CD4-positive, alpha-beta T cell (primary cell): ENCODE measurements at regions of chr1 and their contacts with region 1.

Region 1: DNA sequence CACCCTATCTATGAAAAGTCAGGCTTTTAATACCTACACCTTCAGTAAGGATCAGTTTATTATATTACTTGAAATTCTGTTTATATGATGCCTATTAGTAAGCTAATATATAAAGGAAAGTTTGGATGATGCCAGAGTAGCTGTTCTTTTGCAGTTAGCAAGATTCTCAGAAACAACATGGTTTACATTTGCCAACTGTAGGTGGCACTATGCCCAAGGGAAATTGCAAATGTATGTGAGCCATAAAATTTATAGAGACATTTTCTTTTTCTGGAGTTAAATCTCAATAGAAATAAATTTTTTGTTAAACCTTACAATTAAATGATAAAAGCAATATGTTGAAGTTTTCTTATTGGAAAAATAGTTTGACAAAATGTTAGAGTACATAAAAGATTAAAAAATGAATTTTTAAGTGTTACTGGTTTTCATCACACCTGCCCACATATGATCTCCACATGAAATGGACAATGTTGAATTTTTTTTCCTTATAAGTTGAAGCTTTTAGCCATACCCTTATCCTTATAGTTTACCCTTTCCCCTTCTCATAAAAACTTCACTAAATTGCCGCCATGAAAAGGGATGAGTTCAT is 32.1 kb upstream of the EPHX4 start:
- DNase-seq: peak in 12 of 14 experiments; percentile 3 to 79 (median 32)
- ATAC-seq: peak; percentile 54
- H3K4me3 ChIP-seq: no peak overlapping the region
- H3K4me3 Mint-ChIP-seq: no peak overlapping the region
- H3K27ac ChIP-seq: no peak overlapping the region
- H3K27ac Mint-ChIP-seq: no peak overlapping the region
- H3K4me1 ChIP-seq: no peaks in the 10 kb centered on the region
- H3K4me1 Mint-ChIP-seq: no peaks in the 10 kb centered on the region
- H3K27me3 ChIP-seq: no peaks in the 10 kb centered on the region
- H3K27me3 Mint-ChIP-seq: no peaks in the 10 kb centered on the region
- CTCF ChIP-seq: peak; percentile 77

Region 2: GRCh38 chr1:91968334-91968733 is 29.4 kb before region 1 on chr1:
- CTCF ChIA-PET with region 1: no interaction called
- POLR2A ChIA-PET with region 1: no interaction called
- intact Hi-C with region 1: no loop called
- DNase-seq: no peak
- ATAC-seq: no peak
- H3K4me3 ChIP-seq: no peak overlapping the region
- H3K4me3 Mint-ChIP-seq: no peak overlapping the region
- H3K27ac ChIP-seq: no peak overlapping the region
- H3K27ac Mint-ChIP-seq: no peak overlapping the region
- H3K4me1 ChIP-seq: no peaks in the 10 kb centered on the region
- H3K4me1 Mint-ChIP-seq: no peaks in the 10 kb centered on the region
- H3K27me3 ChIP-seq: no peaks in the 10 kb centered on the region
- H3K27me3 Mint-ChIP-seq: peaks cover 5% of the 10 kb centered on the region
- CTCF ChIP-seq: no peak

Region 3: GRCh38 chr1:92051948-92052347 is 54.2 kb after region 1 on chr1:
- CTCF ChIA-PET with region 1: no interaction called
- POLR2A ChIA-PET with region 1: no interaction called
- intact Hi-C with region 1: no loop called
- DNase-seq: no peak
- ATAC-seq: no peak
- H3K4me3 ChIP-seq: no peak overlapping the region
- H3K4me3 Mint-ChIP-seq: no peak overlapping the region
- H3K27ac ChIP-seq: no peak overlapping the region
- H3K27ac Mint-ChIP-seq: no peak overlapping the region
- H3K4me1 ChIP-seq: no peaks in the 10 kb centered on the region
- H3K4me1 Mint-ChIP-seq: no peaks in the 10 kb centered on the region
- H3K27me3 ChIP-seq: no peaks in the 10 kb centered on the region
- H3K27me3 Mint-ChIP-seq: peaks cover under 1% of the 10 kb centered on the region
- CTCF ChIP-seq: no peak

Region 4: DNA sequence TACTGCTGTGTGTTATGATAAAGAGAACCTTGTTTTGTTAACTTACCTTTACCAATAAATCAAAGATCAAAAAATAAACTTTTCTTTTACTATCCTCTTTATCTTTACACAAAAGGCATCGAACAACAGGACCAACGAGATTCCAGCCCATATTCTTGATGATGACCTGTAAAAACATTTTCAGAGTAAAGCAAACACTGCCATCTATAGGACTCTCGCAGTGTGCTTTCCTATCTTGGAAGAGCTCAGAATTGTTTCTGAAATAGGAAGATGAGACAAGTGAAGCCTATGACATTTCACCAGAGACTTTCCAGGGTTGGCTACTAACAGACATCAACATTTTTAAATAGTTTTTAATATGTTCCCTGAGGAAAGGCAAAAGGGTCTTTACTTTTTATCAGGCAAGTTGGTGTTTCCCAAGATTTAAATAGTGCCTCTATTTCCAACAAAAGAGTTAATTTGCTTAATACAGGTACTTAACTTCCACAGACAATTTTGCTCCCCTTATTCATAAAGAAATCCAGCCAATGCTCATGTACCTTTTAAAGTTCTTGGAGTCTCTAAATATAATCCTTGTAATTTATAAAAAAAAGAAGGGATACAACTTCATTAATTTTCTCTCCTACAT is 293.8 kb after region 1 on chr1:
- CTCF ChIA-PET with region 1: interaction called, 3 read pairs
- POLR2A ChIA-PET with region 1: no interaction called
- intact Hi-C with region 1: loop called (anchors 1 kb)
- DNase-seq: peak in 4 of 14 experiments; percentile 17 to 51 (median 46)
- ATAC-seq: no peak
- H3K4me3 ChIP-seq: no peak overlapping the region
- H3K4me3 Mint-ChIP-seq: no peak overlapping the region
- H3K27ac ChIP-seq: no peak overlapping the region
- H3K27ac Mint-ChIP-seq: no peak overlapping the region
- H3K4me1 ChIP-seq: no peaks in the 10 kb centered on the region
- H3K4me1 Mint-ChIP-seq: peaks cover 12% of the 10 kb centered on the region
- H3K27me3 ChIP-seq: no peaks in the 10 kb centered on the region
- H3K27me3 Mint-ChIP-seq: no peaks in the 10 kb centered on the region
- CTCF ChIP-seq: peak; percentile 71

Region 5: GRCh38 chr1:92817986-92818764 is 820.5 kb after region 1 on chr1:
- CTCF ChIA-PET with region 1: no interaction called
- POLR2A ChIA-PET with region 1: no interaction called
- intact Hi-C with region 1: loop called in 1 of 2 experiments (anchors 2 kb)
- DNase-seq: peak in 4 of 14 experiments; percentile 20 to 61 (median 48)
- ATAC-seq: peak; percentile 65
- H3K4me3 ChIP-seq: no peak overlapping the region
- H3K4me3 Mint-ChIP-seq: no peak overlapping the region
- H3K27ac ChIP-seq: no peak overlapping the region
- H3K27ac Mint-ChIP-seq: no peak overlapping the region
- H3K4me1 ChIP-seq: no peaks in the 10 kb centered on the region
- H3K4me1 Mint-ChIP-seq: no peaks in the 10 kb centered on the region
- H3K27me3 ChIP-seq: no peaks in the 10 kb centered on the region
- H3K27me3 Mint-ChIP-seq: peaks cover 6% of the 10 kb centered on the region
- CTCF ChIP-seq: peak; percentile 52